Stomach (tissue), 19 donors: ENCODE measurements at regions of chr14 and their contacts with region 1.

Region 1: GRCh38 chr14:61461808-61462275 is 140.5 kb downstream of the PRKCH start:
- DNase-seq: peak in 1 of 2 donors; percentile 88
- H3K4me3 ChIP-seq: no peak overlapping the region
- H3K27ac ChIP-seq: no peak overlapping the region
- H3K4me1 ChIP-seq: peaks cover 2 to 40% (median 6%) of the 10 kb centered on the region in 4 donors
- H3K27me3 ChIP-seq: no peaks in the 10 kb centered on the region
- CTCF ChIP-seq: peak in 6 of 7 experiments; percentile 7 to 86 (median 75)
- EP300 ChIP-seq: no peak
- POLR2A ChIP-seq: no peak

Region 2: DNA sequence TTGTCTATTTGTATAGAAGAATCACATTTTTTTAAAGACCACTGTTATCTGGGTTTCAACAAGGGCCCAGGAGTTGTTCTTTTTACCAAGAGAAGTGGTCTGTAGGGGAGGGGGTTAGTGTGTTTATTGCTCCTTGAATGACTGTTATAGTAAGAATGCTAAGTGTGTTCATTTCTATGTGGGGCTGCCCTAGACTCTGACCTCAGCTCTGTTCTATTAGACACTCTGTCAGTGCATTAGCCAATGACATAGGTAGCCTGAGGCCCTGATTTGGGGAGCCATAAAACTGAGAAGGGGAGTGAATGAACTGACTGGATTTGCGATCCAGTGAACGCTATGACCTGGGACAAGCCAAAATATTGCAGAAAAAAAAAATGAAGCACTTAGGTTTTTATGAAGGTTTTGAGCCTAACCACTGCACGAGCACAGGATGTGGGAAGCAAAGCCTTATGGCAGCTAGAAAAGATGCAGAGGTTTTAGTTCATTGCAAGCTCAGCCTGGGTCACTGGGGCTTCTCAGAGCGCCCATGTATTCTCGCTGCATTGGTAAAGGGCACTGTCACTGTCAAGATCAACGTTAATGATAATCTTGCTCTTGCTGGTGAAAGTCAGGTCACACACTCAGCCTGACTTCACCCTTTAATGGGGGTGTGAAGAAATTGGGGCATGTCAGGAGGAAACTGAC is 76.7 kb before region 1 on chr14:
- intact Hi-C with region 1: no loop called
- DNase-seq: peak in 1 of 2 donors; percentile 46
- H3K4me3 ChIP-seq: no peak overlapping the region
- H3K27ac ChIP-seq: no peak overlapping the region
- H3K4me1 ChIP-seq: peaks cover 0 to 5% (median 0%) of the 10 kb centered on the region in 4 donors
- H3K27me3 ChIP-seq: no peaks in the 10 kb centered on the region
- CTCF ChIP-seq: no peak
- EP300 ChIP-seq: no peak
- POLR2A ChIP-seq: no peak

Region 3: GRCh38 chr14:61730756-61731373 is 269.0 kb after region 1 on chr14:
- intact Hi-C with region 1: loop called (anchors 10 kb)
- DNase-seq: peak in 1 of 2 donors; percentile 41
- H3K4me3 ChIP-seq: no peak overlapping the region
- H3K27ac ChIP-seq: peak overlapping the region in 2 of 5 donors; percentile 20 to 38
- H3K4me1 ChIP-seq: peaks cover 0 to 12% (median 0%) of the 10 kb centered on the region in 4 donors
- H3K27me3 ChIP-seq: no peaks in the 10 kb centered on the region
- CTCF ChIP-seq: peak in 4 of 7 experiments; percentile 15 to 55 (median 34)
- EP300 ChIP-seq: no peak
- POLR2A ChIP-seq: no peak